ENCODE measurements at regions of chr1 and their contacts with region 1.

Region 1: GRCh38 chr1:61851849-61852669 is 109.8 kb downstream of the PATJ start:
- DNase-seq: no peak

Region 2: GRCh38 chr1:60978421-60979357 is 873.4 kb before region 1 on chr1:
- intact Hi-C with region 1: loop called in 1 of 2 experiments (anchors 10 kb)
- DNase-seq: no peak